ENCODE measurements at regions of chr14 and their contacts with region 1.

Region 1: GRCh38 chr14:22872033-22872832 is 693 bp downstream of the LRP10 start:
- DNase-seq: peak; percentile 76
- H3K4me3 Mint-ChIP-seq: peak overlapping the region; percentile 86
- H3K27ac Mint-ChIP-seq: peak overlapping the region; percentile 97
- H3K4me1 Mint-ChIP-seq: peaks cover 39% of the 10 kb centered on the region
- H3K27me3 Mint-ChIP-seq: no peaks in the 10 kb centered on the region

Region 2: DNA sequence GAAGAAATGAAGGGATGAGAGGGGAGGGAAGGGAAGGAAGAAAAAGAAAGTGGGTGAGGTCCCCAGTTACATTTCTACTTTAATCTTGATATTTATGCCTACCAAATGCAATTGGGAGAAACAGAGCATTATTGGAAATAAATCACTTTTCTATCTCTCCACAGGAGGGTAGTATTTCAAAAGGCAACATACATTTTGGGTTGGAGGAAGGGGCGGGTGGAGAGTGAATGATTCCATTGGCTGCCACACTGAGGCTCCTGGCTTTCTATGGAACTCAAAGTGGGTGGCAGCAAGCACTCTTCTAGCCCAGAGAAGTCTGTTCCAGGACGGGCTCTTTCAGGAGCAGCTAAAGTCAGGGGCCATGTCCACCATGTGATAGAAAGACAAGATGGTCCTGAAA is 724.5 kb before region 1 on chr14:
- CTCF ChIA-PET with region 1: no interaction called
- POLR2A ChIA-PET with region 1: no interaction called
- DNase-seq: no peak
- H3K4me3 Mint-ChIP-seq: peak overlapping the region; percentile 47
- H3K27ac Mint-ChIP-seq: no peak overlapping the region
- H3K4me1 Mint-ChIP-seq: peaks cover 6% of the 10 kb centered on the region
- H3K27me3 Mint-ChIP-seq: peaks cover 9% of the 10 kb centered on the region

Region 3: DNA sequence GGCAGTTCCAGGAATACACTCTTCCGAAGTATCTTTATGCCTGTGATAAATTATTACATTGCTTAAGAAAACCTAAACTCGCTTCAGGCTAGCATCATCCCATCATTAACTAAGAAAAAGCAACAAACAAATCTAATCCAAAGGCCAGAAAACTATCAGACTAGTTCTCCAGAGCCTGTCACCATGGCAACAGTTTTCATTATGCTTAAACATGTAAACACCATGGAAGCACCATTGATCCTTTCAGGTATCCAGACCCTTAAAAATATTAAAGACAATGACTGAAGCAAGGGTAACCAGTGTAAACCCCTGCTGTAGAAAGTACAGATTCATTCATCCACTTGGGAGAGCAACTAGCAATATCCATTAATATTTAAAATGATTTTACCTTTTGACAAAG is 293.0 kb before region 1 on chr14:
- CTCF ChIA-PET with region 1: no interaction called
- POLR2A ChIA-PET with region 1: no interaction called
- DNase-seq: no peak
- H3K4me3 Mint-ChIP-seq: no peak overlapping the region
- H3K27ac Mint-ChIP-seq: peak overlapping the region; percentile 41
- H3K4me1 Mint-ChIP-seq: peaks cover 63% of the 10 kb centered on the region
- H3K27me3 Mint-ChIP-seq: no peaks in the 10 kb centered on the region

Region 4: DNA sequence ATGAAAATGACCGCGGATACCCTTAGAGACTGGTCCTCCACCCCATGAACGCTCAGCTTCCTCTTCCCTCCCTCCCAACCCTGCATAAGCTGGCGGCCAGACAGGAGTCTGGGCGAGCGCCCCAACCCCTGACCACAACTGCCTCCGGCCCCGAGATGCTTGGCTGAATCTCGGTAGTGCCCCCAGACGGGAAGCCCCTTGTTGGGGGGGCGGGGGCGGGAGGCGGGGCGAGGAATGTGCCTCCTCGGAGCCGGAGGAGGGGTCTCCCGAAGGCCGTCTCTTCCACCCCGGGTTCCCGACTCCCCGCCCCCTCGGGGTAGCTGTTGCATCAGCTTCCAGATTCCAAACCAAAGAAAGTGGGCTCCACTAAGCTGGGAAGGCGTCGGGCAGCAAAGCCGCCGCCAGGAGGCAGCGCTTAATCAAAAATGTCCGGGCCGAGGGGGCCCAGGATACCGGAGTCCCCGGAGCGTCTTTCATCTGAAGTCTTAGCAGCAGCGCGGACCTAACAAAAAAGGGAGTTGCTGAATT is 49.6 kb before region 1 on chr14:
- CTCF ChIA-PET with region 1: interaction called, 14 read pairs
- POLR2A ChIA-PET with region 1: interaction called, 5 read pairs
- DNase-seq: peak; percentile 71
- H3K4me3 Mint-ChIP-seq: peak overlapping the region; percentile 39
- H3K27ac Mint-ChIP-seq: no peak overlapping the region
- H3K4me1 Mint-ChIP-seq: peaks cover 36% of the 10 kb centered on the region
- H3K27me3 Mint-ChIP-seq: peaks cover 19% of the 10 kb centered on the region

Region 5: GRCh38 chr14:22852940-22853767 is 19.1 kb before region 1 on chr14:
- CTCF ChIA-PET with region 1: interaction called, 71 read pairs
- POLR2A ChIA-PET with region 1: interaction called, 21 read pairs
- DNase-seq: peak; percentile 90
- H3K4me3 Mint-ChIP-seq: peak overlapping the region; percentile 68
- H3K27ac Mint-ChIP-seq: peak overlapping the region; percentile 44
- H3K4me1 Mint-ChIP-seq: peaks cover 46% of the 10 kb centered on the region
- H3K27me3 Mint-ChIP-seq: peaks cover 23% of the 10 kb centered on the region

Region 6: GRCh38 chr14:22900081-22900799 is 28.0 kb after region 1 on chr14:
- CTCF ChIA-PET with region 1: interaction called, 69 read pairs
- POLR2A ChIA-PET with region 1: interaction called, 7 read pairs
- DNase-seq: peak; percentile 48
- H3K4me3 Mint-ChIP-seq: no peak overlapping the region
- H3K27ac Mint-ChIP-seq: peak overlapping the region; percentile 44
- H3K4me1 Mint-ChIP-seq: peaks cover 19% of the 10 kb centered on the region
- H3K27me3 Mint-ChIP-seq: no peaks in the 10 kb centered on the region

Region 7: GRCh38 chr14:22929104-22929847 is 57.0 kb after region 1 on chr14 and contains the start of gene PRMT5:
- CTCF ChIA-PET with region 1: interaction called, 10 read pairs
- POLR2A ChIA-PET with region 1: interaction called, 5 read pairs
- DNase-seq: peak; percentile 97
- H3K4me3 Mint-ChIP-seq: no peak within 1 kb of the TSS
- H3K27ac Mint-ChIP-seq: no peak within 1 kb of the TSS
- H3K4me1 Mint-ChIP-seq: peaks cover 21% of the 10 kb centered on the region
- H3K27me3 Mint-ChIP-seq: no peaks in the 10 kb centered on the region
- total RNA-seq, gene PRMT5: 46.3 to 49.8 TPM

Region 8: GRCh38 chr14:23430788-23431085 is 558.5 kb after region 1 on chr14:
- CTCF ChIA-PET with region 1: no interaction called
- POLR2A ChIA-PET with region 1: no interaction called
- DNase-seq: no peak
- H3K4me3 Mint-ChIP-seq: no peak overlapping the region
- H3K27ac Mint-ChIP-seq: no peak overlapping the region
- H3K4me1 Mint-ChIP-seq: no peaks in the 10 kb centered on the region
- H3K27me3 Mint-ChIP-seq: peaks cover 6% of the 10 kb centered on the region

Measured in activated CD4-positive, alpha-beta memory T cell treated with anti-CD3 and anti-CD28 coated beads, Interleukin-2, amount 10 ng/mL, durations not matched to agents 7 days and 5 days (primary cell).